CD4-positive, alpha-beta memory T cell (primary cell): ENCODE measurements at regions of chr15 and their contacts with region 1.

Region 1: DNA sequence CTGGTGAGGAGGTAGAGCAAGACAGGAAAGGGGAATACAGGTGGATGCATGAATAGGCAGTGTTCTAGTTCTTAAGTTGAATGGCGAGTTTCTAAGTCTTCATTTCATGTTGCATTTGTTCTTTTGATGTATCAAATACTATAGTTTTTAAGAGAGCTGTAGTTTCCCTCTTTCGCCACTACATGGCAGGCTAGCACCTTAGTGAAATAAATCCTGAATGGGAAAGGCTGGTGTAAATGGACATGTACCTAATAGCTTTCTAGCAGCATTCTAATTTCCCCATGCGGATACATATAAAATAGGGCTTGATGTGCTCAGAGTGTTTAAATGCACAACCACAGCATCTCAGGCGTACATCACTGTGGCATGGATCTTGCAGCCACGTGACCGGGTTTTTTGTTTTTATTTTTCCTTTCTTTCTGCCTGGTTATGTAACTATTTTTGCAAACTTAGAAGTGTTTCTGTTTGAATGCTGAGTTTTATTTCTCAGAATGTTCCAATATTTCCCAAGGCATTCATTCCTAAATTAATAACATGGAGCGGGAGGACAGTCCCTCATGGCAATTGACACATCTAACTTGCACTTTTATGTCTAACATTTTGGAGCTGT is 23.5 kb upstream of the CLN6 start:
- DNase-seq: peak; percentile 48 to 57 (median 55)
- H3K4me3 ChIP-seq: no peak overlapping the region
- H3K4me3 Mint-ChIP-seq: no peak overlapping the region
- H3K27ac ChIP-seq: no peak overlapping the region
- H3K27ac Mint-ChIP-seq: peak overlapping the region in 1 of 7 donors; percentile 29
- H3K4me1 ChIP-seq: peaks cover 5% of the 10 kb centered on the region
- H3K4me1 Mint-ChIP-seq: peaks cover 0 to 4% (median under 1%) of the 10 kb centered on the region in 4 donors
- H3K27me3 ChIP-seq: no peaks in the 10 kb centered on the region
- H3K27me3 Mint-ChIP-seq: peaks cover 0 to 3% of the 10 kb centered on the region in 2 donors

Region 2: DNA sequence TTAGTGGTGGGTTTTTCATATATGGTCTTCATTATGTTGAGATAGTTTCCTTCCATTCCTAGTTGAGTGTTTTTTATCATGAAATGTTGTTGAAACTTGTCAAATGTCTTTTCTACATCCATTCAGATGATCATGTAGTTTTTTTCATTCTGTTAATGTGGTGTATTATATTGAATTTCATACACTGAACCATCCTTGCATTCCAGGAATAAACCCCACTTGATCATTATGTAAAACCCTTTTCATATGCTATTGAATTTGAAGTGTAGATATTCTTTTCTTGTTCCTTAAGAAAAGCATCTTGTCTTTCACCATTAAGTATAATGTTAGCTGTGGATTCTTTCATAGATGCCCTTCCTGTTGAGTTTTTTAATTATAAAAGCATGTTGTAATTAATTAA is 156.0 kb before region 1 on chr15:
- CTCF ChIA-PET with region 1: no interaction called
- POLR2A ChIA-PET with region 1: no interaction called
- intact Hi-C with region 1: no loop called
- DNase-seq: no peak
- H3K4me3 ChIP-seq: no peak overlapping the region
- H3K4me3 Mint-ChIP-seq: peak overlapping the region in 1 of 8 donors; percentile 5
- H3K27ac ChIP-seq: no peak overlapping the region
- H3K27ac Mint-ChIP-seq: no peak overlapping the region
- H3K4me1 ChIP-seq: peaks cover 21% of the 10 kb centered on the region
- H3K4me1 Mint-ChIP-seq: peaks cover 25 to 68% (median 52%) of the 10 kb centered on the region in 4 donors
- H3K27me3 ChIP-seq: no peaks in the 10 kb centered on the region
- H3K27me3 Mint-ChIP-seq: no peaks in the 10 kb centered on the region

Region 3: GRCh38 chr15:68200016-68200861 is 52.8 kb before region 1 on chr15:
- CTCF ChIA-PET with region 1: no interaction called
- POLR2A ChIA-PET with region 1: no interaction called
- intact Hi-C with region 1: no loop called
- DNase-seq: no peak
- H3K4me3 ChIP-seq: no peak overlapping the region
- H3K4me3 Mint-ChIP-seq: no peak overlapping the region
- H3K27ac ChIP-seq: no peak overlapping the region
- H3K27ac Mint-ChIP-seq: peak overlapping the region in 2 of 7 donors; percentile 1 to 15
- H3K4me1 ChIP-seq: peaks cover 3% of the 10 kb centered on the region
- H3K4me1 Mint-ChIP-seq: peaks cover 0 to 3% (median under 1%) of the 10 kb centered on the region in 4 donors
- H3K27me3 ChIP-seq: no peaks in the 10 kb centered on the region
- H3K27me3 Mint-ChIP-seq: no peaks in the 10 kb centered on the region

Region 4: DNA sequence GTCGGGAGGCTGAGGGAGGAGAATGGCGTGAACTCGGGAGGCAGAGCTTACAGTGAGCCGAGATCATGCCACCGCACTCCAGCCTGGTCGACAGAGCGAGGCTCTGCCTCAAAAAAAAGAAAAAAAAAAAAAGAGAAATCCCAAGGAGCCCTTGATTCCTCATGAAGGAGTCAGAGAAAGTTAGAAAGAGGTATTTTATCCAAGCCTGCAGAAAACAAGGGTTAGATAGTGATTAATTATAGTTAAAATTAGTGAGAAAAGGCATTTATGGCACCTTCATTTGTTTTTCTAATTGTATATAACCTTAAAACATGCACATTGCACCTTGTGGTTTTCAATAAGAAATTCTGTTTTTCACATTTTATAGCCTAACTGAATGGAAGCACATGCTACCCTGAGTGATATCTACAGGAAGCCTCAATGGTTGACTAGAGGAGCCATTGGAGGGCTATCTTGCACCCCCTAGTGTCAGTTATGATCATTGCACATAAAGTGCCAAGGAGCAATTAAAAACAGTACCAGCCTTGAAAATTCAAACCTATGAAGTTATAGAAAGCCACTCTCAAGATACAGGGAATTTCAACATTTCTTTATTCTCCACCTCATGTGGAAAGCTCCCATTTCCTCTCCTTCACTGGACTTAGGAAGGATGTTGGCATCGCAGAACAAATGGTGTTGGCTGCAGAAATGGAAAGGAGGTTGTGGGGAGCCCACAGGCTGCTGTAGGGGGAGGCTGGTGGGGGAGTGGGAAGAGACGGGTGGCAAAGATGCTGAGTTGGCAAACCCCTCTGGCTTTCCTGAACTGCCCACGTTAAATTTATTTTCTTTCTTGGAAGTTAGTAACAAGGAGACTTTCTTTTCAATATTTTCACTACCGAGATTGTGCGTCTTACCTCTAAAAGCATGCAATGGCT is 130.4 kb after region 1 on chr15:
- CTCF ChIA-PET with region 1: interaction called, 29 read pairs
- POLR2A ChIA-PET with region 1: no interaction called
- intact Hi-C with region 1: no loop called
- DNase-seq: peak in 4 of 5 donors; percentile 39 to 53 (median 42)
- H3K4me3 ChIP-seq: no peak overlapping the region
- H3K4me3 Mint-ChIP-seq: no peak overlapping the region
- H3K27ac ChIP-seq: no peak overlapping the region
- H3K27ac Mint-ChIP-seq: no peak overlapping the region
- H3K4me1 ChIP-seq: peaks cover 11% of the 10 kb centered on the region
- H3K4me1 Mint-ChIP-seq: peaks cover 8 to 13% (median 11%) of the 10 kb centered on the region in 4 donors
- H3K27me3 ChIP-seq: no peaks in the 10 kb centered on the region
- H3K27me3 Mint-ChIP-seq: peaks cover 0 to 5% of the 10 kb centered on the region in 2 donors

Region 5: DNA sequence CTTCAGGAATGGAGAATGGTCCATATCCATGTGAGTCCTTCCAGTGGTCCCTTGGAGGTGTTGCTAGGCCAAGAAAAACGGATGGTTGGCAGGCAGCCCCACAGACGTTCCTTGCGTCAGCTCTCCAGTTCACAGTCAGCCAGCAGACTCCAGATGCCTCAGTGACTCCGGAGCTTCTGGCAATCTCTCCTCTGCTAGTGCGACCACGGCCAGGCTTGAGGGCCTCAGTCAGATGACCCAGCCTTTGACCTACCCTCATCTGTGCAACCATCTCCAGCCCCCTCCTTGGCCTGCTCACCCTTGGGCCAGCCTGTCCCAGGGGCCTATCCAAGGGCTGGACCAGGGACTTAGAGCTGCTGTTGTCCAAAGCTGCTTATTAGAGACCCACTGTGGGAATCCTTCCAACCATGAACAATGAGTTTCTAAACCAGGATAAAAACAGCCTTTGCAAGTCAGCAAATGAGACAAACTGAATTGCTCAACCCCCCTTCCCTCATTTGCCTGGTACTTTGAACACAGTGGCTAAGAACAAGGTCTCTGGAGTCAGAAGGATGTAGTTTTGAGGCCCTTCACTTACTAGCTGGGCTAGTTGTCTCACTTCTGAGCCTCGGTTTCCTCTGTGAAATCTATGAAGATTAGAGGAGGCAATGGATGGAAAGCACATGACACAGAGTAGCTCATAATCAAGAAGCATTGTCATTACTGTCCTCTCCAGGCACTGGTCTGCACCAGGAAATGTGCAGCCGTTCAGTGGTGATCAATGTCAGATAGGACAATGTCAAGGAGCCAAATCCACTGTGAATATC is 522.8 kb after region 1 on chr15:
- CTCF ChIA-PET with region 1: no interaction called
- POLR2A ChIA-PET with region 1: no interaction called
- intact Hi-C with region 1: no loop called
- DNase-seq: no peak
- H3K4me3 ChIP-seq: no peak overlapping the region
- H3K4me3 Mint-ChIP-seq: no peak overlapping the region
- H3K27ac ChIP-seq: no peak overlapping the region
- H3K27ac Mint-ChIP-seq: no peak overlapping the region
- H3K4me1 ChIP-seq: no peaks in the 10 kb centered on the region
- H3K4me1 Mint-ChIP-seq: no peaks in the 10 kb centered on the region
- H3K27me3 ChIP-seq: no peaks in the 10 kb centered on the region
- H3K27me3 Mint-ChIP-seq: no peaks in the 10 kb centered on the region

Region 6: GRCh38 chr15:68924866-68925560 is 672.0 kb after region 1 on chr15:
- CTCF ChIA-PET with region 1: no interaction called
- POLR2A ChIA-PET with region 1: no interaction called
- intact Hi-C with region 1: loop called (anchors 5 kb)
- DNase-seq: peak; percentile 30 to 61 (median 43)
- H3K4me3 ChIP-seq: no peak overlapping the region
- H3K4me3 Mint-ChIP-seq: no peak overlapping the region
- H3K27ac ChIP-seq: no peak overlapping the region
- H3K27ac Mint-ChIP-seq: peak overlapping the region in 1 of 7 donors; percentile 7
- H3K4me1 ChIP-seq: no peaks in the 10 kb centered on the region
- H3K4me1 Mint-ChIP-seq: no peaks in the 10 kb centered on the region
- H3K27me3 ChIP-seq: no peaks in the 10 kb centered on the region
- H3K27me3 Mint-ChIP-seq: peaks cover 11 to 27% of the 10 kb centered on the region in 2 donors